H1 (cell line): ENCODE measurements at regions of chr7 and their contacts with region 1.

Region 1: DNA sequence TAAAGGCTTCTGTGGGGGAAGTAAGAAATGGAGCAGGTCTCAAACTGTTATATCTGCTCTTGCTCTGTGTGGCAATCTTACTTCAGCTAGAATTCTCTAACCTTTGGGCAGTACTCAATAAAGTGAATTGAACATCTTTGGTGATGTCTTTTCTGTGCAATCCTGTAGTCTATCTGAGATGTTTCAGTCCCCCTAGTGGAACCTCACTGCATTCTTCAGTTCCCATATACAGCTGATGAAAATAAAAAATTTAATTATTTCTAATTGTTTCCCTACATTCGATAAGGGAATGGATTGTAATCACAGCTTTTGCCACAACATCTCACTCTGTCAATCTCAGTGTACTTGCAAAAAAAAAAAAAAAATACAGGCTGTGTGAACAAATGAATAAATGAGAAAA is 522.6 kb downstream of the DNAJB9 start:
- DNase-seq: no peak
- H3K4me3 ChIP-seq: no peak overlapping the region
- H3K27ac ChIP-seq: no peak overlapping the region
- H3K4me1 ChIP-seq: no peaks in the 10 kb centered on the region
- H3K27me3 ChIP-seq: no peaks in the 10 kb centered on the region
- CTCF ChIP-seq: peak in 1 of 3 experiments; percentile 13; a peak in 1 of 4 replicates
- EP300 ChIP-seq: no peak
- POLR2A ChIP-seq: no peak
- RAD21 ChIP-seq: peak in 1 of 2 experiments; percentile 42; a peak in 3 of 4 replicates

Region 2: GRCh38 chr7:107678110-107678753 is 1414.0 kb before region 1 on chr7:
- CTCF ChIA-PET with region 1: no interaction called
- POLR2A ChIA-PET with region 1: no interaction called
- DNase-seq: no peak
- H3K4me3 ChIP-seq: no peak overlapping the region
- H3K27ac ChIP-seq: no peak overlapping the region
- H3K4me1 ChIP-seq: peaks cover 0 to 3% (median 0%) of the 10 kb centered on the region in 4 experiments; a peak in 2 of 7 replicates
- H3K27me3 ChIP-seq: no peaks in the 10 kb centered on the region
- CTCF ChIP-seq: no peak
- EP300 ChIP-seq: no peak
- POLR2A ChIP-seq: no peak
- RAD21 ChIP-seq: no peak

Region 3: DNA sequence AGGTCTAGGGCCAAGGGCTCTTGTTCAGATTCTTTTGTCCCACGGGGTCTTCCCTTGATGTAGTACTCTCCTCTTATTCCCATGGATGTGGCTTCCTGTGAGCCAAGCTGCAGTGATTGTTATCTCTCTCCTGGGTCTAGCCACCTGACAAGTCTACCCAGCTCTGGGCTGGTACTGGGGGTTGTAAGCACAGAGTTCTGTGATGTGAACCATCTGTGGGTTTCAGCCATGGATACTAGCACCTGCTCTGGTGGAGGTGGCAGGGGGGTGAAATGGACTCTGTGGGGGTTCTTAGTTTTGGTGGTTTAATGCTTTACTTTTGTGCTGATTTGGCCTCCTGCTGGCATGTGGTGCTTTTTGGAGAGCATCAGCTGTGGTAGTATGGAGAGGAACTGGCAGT is 171.8 kb before region 1 on chr7:
- CTCF ChIA-PET with region 1: no interaction called
- POLR2A ChIA-PET with region 1: no interaction called
- DNase-seq: no peak
- H3K4me3 ChIP-seq: no peak overlapping the region
- H3K27ac ChIP-seq: no peak overlapping the region
- H3K4me1 ChIP-seq: no peaks in the 10 kb centered on the region
- H3K27me3 ChIP-seq: no peaks in the 10 kb centered on the region
- CTCF ChIP-seq: no peak
- EP300 ChIP-seq: no peak
- POLR2A ChIP-seq: no peak
- RAD21 ChIP-seq: no peak

Region 4: GRCh38 chr7:108973075-108973474 is 119.2 kb before region 1 on chr7:
- CTCF ChIA-PET with region 1: interaction called, 12 read pairs
- POLR2A ChIA-PET with region 1: no interaction called
- DNase-seq: no peak
- H3K4me3 ChIP-seq: no peak overlapping the region
- H3K27ac ChIP-seq: no peak overlapping the region
- H3K4me1 ChIP-seq: no peaks in the 10 kb centered on the region
- H3K27me3 ChIP-seq: no peaks in the 10 kb centered on the region
- CTCF ChIP-seq: peak in 2 of 3 experiments; percentile 26 to 53; a peak in 2 of 4 replicates
- EP300 ChIP-seq: no peak
- POLR2A ChIP-seq: no peak
- RAD21 ChIP-seq: peak; percentile 84 to 87

Region 5: DNA sequence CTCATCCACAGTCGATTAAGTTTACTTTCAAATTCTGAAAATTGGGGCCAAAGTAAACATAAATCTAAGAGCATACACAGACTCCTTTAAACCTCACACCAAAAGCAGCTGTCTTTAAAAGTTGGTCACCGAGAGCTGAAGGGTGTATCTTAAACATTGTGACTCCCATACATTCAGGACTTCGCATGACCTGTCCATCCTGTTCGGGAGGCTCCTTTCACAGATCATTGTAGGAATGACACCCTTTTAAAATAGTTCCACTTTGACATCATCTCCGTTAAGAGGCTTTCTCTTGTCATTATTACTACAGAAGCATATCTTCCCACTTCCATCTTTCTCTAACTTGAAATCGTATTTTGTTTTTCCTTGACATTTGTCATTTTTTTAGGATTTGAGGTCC is 82.6 kb before region 1 on chr7:
- CTCF ChIA-PET with region 1: no interaction called
- POLR2A ChIA-PET with region 1: no interaction called
- DNase-seq: no peak
- H3K4me3 ChIP-seq: no peak overlapping the region
- H3K27ac ChIP-seq: no peak overlapping the region
- H3K4me1 ChIP-seq: no peaks in the 10 kb centered on the region
- H3K27me3 ChIP-seq: no peaks in the 10 kb centered on the region
- CTCF ChIP-seq: no peak
- EP300 ChIP-seq: no peak
- POLR2A ChIP-seq: no peak
- RAD21 ChIP-seq: no peak

Region 6: GRCh38 chr7:109076573-109076972 is 15.7 kb before region 1 on chr7:
- CTCF ChIA-PET with region 1: interaction called, 18 read pairs
- POLR2A ChIA-PET with region 1: interaction called, 3 read pairs
- DNase-seq: no peak
- H3K4me3 ChIP-seq: no peak overlapping the region
- H3K27ac ChIP-seq: no peak overlapping the region
- H3K4me1 ChIP-seq: no peaks in the 10 kb centered on the region; a peak in 2 of 7 replicates
- H3K27me3 ChIP-seq: no peaks in the 10 kb centered on the region
- CTCF ChIP-seq: no peak
- EP300 ChIP-seq: no peak
- POLR2A ChIP-seq: no peak
- RAD21 ChIP-seq: no peak

Region 7: DNA sequence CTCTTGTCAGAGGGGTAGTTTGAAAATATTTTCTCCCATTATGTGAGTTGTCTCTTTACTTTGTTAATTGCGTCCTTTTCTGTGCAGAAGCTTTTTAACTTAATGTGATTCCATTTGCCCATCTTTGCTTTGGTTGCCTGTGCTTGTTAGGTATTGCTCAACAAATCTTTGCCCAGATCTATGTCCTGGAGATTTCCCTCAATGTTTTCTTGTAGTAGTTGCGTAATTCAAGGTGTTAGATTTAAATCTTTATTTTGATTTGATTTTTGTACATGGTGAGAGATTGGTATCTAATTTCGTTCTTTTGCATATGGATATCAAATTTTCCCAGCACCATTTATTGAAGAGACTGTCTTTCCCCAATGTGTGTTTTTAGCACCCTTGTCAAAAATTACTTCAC is 44.6 kb after region 1 on chr7:
- CTCF ChIA-PET with region 1: no interaction called
- POLR2A ChIA-PET with region 1: no interaction called
- DNase-seq: no peak
- H3K4me3 ChIP-seq: no peak overlapping the region
- H3K27ac ChIP-seq: no peak overlapping the region
- H3K4me1 ChIP-seq: no peaks in the 10 kb centered on the region
- H3K27me3 ChIP-seq: no peaks in the 10 kb centered on the region
- CTCF ChIP-seq: no peak
- EP300 ChIP-seq: no peak
- POLR2A ChIP-seq: no peak
- RAD21 ChIP-seq: no peak